ENCODE measurements at regions of chr9 and their contacts with region 1.

Region 1: GRCh38 chr9:25755951-25756350 is 77.7 kb upstream of the TUSC1 start:
- DNase-seq: no peak

Region 2: GRCh38 chr9:25827626-25828025 is 71.7 kb after region 1 on chr9:
- intact Hi-C with region 1: loop called in 1 of 2 experiments (anchors 2 kb)
- DNase-seq: no peak